Activated naive CD4-positive, alpha-beta T cell treated with anti-CD3 and anti-CD28 coated beads, Interleukin-2, amount 10 ng/mL, durations not matched to agents 7 days and 5 days (primary cell): ENCODE measurements at regions of chr9 and their contacts with region 1.

Region 1: GRCh38 chr9:131011274-131012022 is 2.5 kb downstream of the LAMC3 start:
- DNase-seq: no peak
- H3K4me3 Mint-ChIP-seq: no peak overlapping the region
- H3K27ac Mint-ChIP-seq: no peak overlapping the region
- H3K4me1 Mint-ChIP-seq: peaks cover 2% of the 10 kb centered on the region
- H3K27me3 Mint-ChIP-seq: peaks cover 64% of the 10 kb centered on the region

Region 2: GRCh38 chr9:130712564-130713285 is 298.7 kb before region 1 on chr9:
- CTCF ChIA-PET with region 1: no interaction called
- DNase-seq: peak; percentile 98
- H3K4me3 Mint-ChIP-seq: peak overlapping the region; percentile 94
- H3K27ac Mint-ChIP-seq: peak overlapping the region; percentile 97
- H3K4me1 Mint-ChIP-seq: peaks cover 35% of the 10 kb centered on the region
- H3K27me3 Mint-ChIP-seq: peaks cover 8% of the 10 kb centered on the region

Region 3: DNA sequence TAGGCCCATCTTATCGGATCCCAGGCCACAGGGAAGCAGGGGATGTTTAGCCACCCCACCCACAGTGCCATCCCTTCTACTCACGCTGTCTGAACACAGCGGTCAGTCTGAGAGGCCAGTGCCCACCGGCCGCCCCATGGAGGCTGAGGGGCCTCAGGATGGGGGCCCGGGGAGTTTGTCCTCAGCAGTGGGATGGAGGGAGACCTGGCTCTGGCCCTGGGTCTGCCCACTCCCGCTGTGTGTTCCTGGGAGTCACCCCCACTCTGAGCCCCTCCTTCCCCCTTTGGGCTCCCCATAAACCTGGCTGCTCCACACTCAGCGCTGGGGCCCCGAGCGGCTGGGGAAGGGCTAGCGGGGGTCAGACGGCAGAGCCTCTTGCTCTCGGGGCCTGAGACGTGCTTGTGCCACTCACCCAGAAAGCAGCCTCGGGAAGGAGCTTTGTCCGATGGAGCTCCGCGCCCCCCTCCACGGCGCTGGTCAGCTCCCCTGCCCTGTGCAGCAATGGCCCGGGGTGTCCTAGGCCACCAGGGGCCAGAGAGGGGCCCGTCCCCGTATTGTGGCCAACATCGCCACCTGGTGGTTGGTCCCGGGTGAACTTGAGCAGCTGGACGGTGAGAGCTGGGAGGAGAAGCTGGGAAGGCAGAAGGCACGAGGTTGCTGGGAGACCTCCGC is 13.4 kb before region 1 on chr9:
- CTCF ChIA-PET with region 1: interaction called, 10 read pairs
- DNase-seq: peak; percentile 72
- H3K4me3 Mint-ChIP-seq: no peak overlapping the region
- H3K27ac Mint-ChIP-seq: no peak overlapping the region
- H3K4me1 Mint-ChIP-seq: no peaks in the 10 kb centered on the region
- H3K27me3 Mint-ChIP-seq: peaks cover 35% of the 10 kb centered on the region